WTC11 (cell line): ENCODE measurements at regions of chr14 and their contacts with region 1.

Region 1: DNA sequence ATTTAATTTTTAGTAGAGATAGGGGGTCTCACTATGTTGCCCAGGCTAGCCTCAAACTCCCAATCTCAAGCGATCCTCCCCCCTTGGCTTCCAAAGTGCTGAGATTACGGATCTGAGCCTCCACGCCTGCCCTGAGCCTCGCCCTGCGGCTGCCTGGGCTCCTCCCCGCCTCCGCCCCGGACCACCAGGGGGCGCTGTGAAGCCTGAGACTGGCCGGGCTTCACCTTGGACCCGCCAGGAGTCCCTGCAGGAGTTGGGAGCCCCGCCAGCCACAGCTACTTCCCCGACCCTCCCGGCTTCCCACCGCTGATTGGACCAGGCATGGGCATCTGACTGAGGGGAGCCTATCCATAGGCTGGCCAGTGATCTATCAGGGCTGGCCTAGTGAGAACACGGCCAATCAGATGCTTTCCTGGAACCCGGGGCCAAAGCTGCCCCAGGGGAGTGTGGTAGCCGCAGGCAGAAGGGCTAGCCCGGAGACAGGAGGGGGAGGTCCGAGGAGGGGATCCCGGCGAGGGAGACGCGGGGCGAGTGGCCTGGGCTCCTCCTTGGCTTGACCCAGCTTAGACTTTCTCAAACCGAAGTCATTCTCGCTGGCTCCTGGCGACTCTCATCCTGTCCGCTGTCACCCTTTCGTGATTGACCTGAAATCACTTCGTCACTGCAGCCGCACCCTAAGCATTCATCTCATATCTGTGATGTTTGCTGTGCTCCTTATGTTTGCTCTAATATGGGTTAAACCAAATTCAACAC is 15.1 kb upstream of the ANKRD9 start:
- DNase-seq: peak; percentile 99
- ATAC-seq: peak; percentile 99
- H3K4me3 Mint-ChIP-seq: peak overlapping the region; percentile 80
- H3K27ac Mint-ChIP-seq: peak overlapping the region; percentile 87
- H3K4me1 Mint-ChIP-seq: peaks cover 20% of the 10 kb centered on the region
- H3K27me3 Mint-ChIP-seq: no peaks in the 10 kb centered on the region; the same call in none of the 2 replicates
- CTCF ChIP-seq: peak; percentile 90

Region 2: DNA sequence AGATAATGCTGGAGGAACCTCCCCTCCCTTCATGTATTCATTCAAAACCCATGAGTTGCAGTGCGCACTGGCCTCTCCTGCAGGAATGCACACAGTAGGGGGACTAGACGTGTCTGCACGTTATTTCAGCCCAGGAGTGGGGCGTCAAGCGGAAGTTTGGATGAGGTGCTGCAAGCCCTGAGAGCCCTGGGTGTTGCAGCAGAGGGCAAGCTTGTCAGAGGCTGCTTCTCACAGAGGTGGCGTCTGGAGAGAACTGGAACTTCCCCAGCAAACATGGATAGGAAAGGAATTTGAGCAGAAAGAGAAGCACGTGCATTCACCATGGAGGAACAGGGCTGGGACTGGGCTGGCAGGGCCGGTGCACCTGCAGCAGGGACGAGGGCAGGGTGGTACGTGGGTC is 97.0 kb before region 1 on chr14:
- CTCF ChIA-PET with region 1: no interaction called
- POLR2A ChIA-PET with region 1: no interaction called
- DNase-seq: no peak
- ATAC-seq: no peak
- H3K4me3 Mint-ChIP-seq: no peak overlapping the region
- H3K27ac Mint-ChIP-seq: no peak overlapping the region
- H3K4me1 Mint-ChIP-seq: peaks cover 4% of the 10 kb centered on the region; the same call in 1 of the 2 replicates
- H3K27me3 Mint-ChIP-seq: no peaks in the 10 kb centered on the region
- CTCF ChIP-seq: no peak

Region 3: DNA sequence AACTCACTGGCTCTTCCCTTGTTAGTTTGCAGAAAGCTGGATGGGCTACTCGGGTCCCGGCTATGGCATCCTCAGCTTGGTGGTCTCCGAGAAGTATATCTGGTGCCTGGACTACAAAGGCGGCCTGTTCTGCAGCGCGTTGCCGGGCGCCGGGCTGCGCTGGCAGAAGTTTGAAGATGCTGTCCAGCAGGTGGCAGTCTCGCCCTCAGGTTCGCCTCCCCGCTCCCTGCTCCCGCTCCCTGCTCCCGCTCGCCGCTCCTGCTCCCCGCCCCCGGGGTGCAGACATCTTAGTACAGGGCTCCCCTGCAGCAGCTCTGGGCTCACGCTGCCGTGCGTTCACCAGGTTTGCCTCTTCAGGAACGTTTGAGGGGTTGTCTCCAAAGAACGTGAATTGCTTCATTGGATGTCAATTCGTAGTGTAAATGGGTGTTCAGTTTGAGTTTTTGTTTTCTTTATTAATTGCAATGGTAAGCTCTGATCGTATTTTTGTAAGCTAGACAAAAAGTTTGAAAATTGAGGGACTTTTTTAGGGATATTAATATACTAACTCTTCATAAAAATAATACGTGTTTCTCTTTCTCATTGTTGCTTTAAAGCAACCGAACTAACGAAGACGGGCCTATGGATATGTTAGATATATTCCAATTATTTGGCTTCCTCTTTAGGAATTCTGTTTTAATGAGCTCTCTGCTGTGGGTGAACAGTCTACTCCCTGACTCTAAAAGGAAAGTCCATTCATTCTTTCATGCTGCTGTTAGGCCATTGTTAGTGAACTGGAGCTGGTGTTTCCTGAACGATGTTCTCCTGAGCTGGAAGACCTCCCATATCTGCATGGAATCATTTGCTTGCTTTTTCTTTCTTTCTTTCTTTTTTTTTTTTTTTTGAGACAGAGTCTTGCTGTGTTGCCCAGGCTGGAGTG is 86.4 kb before region 1 on chr14:
- CTCF ChIA-PET with region 1: interaction called, 14 read pairs
- POLR2A ChIA-PET with region 1: no interaction called
- DNase-seq: peak; percentile 96
- ATAC-seq: peak; percentile 98
- H3K4me3 Mint-ChIP-seq: peak overlapping the region; percentile 57
- H3K27ac Mint-ChIP-seq: peak overlapping the region; percentile 87
- H3K4me1 Mint-ChIP-seq: peaks cover 6% of the 10 kb centered on the region
- H3K27me3 Mint-ChIP-seq: no peaks in the 10 kb centered on the region
- CTCF ChIP-seq: peak; percentile 64

Region 4: DNA sequence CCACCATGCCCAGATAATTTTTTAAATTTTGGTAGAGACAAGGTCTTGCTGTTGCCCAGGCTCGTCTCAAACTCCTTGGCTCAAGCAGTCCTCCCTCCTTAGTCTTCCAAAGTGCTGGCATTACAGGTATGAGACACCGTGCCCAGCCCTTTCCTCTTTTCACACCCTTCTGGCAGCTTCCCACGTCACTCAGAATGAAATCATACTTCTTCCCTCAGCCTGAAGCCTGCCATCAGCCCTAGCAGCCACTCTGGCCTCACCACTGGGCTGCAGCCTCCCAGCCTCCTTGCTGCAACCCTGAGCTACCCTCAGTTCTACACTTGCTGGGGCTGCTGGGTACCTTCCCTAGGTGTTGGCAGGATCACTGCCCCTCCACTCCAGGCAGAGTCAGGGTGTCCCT is 33.3 kb before region 1 on chr14:
- CTCF ChIA-PET with region 1: no interaction called
- POLR2A ChIA-PET with region 1: no interaction called
- DNase-seq: no peak
- ATAC-seq: no peak
- H3K4me3 Mint-ChIP-seq: no peak overlapping the region
- H3K27ac Mint-ChIP-seq: peak overlapping the region; percentile 72; the same call in 1 of the 2 replicates
- H3K4me1 Mint-ChIP-seq: no peaks in the 10 kb centered on the region
- H3K27me3 Mint-ChIP-seq: no peaks in the 10 kb centered on the region
- CTCF ChIP-seq: no peak

Region 5: GRCh38 chr14:102539580-102540314 is 15.1 kb after region 1 on chr14:
- CTCF ChIA-PET with region 1: interaction called, 24 read pairs
- POLR2A ChIA-PET with region 1: interaction called, 3 read pairs
- DNase-seq: no peak
- ATAC-seq: no peak
- H3K4me3 Mint-ChIP-seq: no peak overlapping the region
- H3K27ac Mint-ChIP-seq: no peak overlapping the region
- H3K4me1 Mint-ChIP-seq: peaks cover 5% of the 10 kb centered on the region
- H3K27me3 Mint-ChIP-seq: peaks cover 8% of the 10 kb centered on the region
- CTCF ChIP-seq: no peak

Region 6: DNA sequence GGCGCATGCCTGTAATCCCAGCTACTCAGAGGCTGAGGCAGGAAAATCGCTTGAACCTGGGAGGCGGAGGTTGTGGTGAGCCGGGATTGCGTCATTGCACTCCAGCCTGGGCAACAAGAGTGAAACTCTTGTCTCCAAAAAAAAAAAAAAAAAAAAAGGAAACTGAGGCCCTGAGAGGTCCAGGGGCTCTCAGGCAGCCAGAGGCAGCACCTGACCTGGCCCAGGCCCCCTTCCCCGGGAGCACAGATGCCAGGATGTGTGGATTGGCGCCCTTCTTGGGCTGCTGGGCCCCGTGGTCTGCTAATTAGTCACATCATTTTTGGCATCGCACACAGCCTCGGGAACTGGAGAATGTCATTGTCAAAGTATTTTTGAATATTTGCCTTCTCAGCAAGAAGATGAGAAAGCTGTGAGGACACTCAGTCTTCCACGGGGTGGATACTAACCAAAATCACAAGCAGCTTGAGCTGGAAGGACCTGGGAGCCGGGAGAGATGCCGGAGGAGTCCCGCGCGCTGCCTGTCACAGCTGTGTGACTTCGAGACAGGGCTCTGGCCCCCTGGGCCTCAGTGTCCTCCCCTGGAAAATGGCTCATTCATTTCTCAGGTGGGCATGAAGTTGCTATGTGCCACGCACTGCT is 55.2 kb after region 1 on chr14:
- CTCF ChIA-PET with region 1: interaction called, 15 read pairs
- POLR2A ChIA-PET with region 1: interaction called, 3 read pairs
- DNase-seq: no peak
- ATAC-seq: no peak
- H3K4me3 Mint-ChIP-seq: no peak overlapping the region
- H3K27ac Mint-ChIP-seq: no peak overlapping the region
- H3K4me1 Mint-ChIP-seq: peaks cover 14% of the 10 kb centered on the region
- H3K27me3 Mint-ChIP-seq: no peaks in the 10 kb centered on the region; the same call in 1 of the 2 replicates
- CTCF ChIP-seq: no peak

Region 7: DNA sequence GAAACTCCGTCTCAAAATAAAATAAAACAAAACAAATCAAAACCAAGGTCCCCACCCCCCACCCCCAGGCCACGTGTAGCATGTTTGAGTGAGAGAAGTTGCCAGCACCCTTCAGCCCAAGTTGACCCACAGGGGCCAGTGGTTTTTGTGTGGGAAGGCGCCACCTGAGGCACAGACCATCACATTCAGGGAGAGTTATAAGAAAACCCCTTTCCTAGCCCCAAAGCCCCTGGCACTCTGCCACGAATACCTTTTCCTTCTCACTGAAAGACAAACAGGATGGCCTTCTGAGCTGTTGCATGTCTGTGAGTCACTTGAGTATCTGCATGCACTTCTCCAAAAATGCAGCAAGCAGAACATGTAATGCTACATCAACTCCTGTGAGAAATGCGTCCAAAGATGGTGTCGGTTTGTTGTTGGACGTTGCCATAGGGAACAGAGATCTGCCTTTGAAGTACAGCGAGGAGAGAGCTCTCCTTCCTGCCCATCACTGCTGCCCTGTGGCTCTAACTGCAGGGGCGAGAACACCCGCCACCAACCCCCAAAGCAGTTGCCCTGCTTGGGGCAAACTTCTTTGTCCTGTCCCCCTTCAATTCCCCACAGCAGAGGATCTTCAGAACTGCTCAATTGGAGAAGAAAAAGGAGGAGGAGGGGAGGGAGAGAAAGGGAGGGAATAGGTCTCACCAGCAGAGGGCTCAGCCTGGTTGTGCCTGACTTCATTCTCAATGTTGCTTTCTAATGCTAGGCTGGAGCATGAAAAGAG is 249.9 kb after region 1 on chr14:
- CTCF ChIA-PET with region 1: interaction called, 18 read pairs
- POLR2A ChIA-PET with region 1: no interaction called
- DNase-seq: peak; percentile 48
- ATAC-seq: peak; percentile 55
- H3K4me3 Mint-ChIP-seq: no peak overlapping the region
- H3K27ac Mint-ChIP-seq: no peak overlapping the region; the same call in 1 of the 2 replicates
- H3K4me1 Mint-ChIP-seq: peaks cover 29% of the 10 kb centered on the region
- H3K27me3 Mint-ChIP-seq: peaks cover 14% of the 10 kb centered on the region
- CTCF ChIP-seq: no peak

Region 8: DNA sequence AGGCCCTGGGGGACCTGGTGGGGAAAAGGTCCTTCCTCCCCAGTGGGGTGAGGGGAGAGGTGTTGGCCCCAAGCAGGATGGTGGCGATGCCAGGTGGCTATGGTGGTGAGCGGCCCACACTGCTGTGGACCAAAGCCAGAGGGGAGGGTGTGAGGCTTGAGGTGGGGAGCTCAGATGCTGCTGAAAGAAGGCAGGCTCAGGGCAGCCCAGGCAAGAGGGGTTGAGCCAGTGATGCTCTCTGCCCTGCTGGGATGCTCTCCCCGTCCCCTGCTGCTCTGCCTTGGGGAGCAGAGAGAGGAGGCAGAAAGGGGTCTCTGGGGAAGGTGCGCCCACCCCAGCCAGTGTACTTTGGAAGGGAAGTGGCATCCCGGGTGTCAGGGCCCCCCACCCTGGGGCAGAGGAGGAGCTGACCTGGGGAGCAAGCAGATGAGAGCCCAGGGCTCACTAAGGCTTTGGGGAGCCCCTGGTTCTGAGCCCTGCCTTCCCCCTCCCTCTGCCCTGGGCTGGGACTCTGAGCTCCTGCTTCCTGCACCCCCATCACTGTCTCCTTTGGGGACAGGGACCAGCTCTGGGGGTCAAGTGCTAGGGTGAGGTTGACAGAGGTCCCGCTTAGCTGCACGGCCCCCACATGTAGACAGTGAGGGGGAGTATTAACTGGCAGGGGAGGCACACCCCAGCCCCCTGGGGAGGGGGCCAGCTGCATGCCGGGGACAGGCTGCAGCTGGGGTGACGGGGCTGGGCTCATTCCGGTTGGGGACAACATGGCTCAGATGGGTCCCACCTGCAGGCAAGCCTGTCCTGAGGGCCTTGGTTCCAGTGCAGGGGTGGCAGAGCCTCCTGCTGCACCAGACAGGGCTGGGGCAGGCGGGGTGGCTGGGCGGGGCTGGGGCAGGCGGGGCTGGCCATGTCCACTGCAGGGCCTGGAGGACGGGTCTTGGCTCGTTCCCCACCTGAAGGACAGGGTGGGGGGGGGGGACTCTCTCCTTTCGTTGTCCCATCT is 1738.2 kb after region 1 on chr14:
- CTCF ChIA-PET with region 1: no interaction called
- POLR2A ChIA-PET with region 1: no interaction called
- DNase-seq: no peak
- ATAC-seq: no peak
- H3K4me3 Mint-ChIP-seq: no peak overlapping the region
- H3K27ac Mint-ChIP-seq: no peak overlapping the region
- H3K4me1 Mint-ChIP-seq: peaks cover under 1% of the 10 kb centered on the region; the same call in 1 of the 2 replicates
- H3K27me3 Mint-ChIP-seq: no peaks in the 10 kb centered on the region; the same call in 1 of the 2 replicates
- CTCF ChIP-seq: no peak